ENCODE measurements at regions of chr3 and their contacts with region 1.

Region 1: DNA sequence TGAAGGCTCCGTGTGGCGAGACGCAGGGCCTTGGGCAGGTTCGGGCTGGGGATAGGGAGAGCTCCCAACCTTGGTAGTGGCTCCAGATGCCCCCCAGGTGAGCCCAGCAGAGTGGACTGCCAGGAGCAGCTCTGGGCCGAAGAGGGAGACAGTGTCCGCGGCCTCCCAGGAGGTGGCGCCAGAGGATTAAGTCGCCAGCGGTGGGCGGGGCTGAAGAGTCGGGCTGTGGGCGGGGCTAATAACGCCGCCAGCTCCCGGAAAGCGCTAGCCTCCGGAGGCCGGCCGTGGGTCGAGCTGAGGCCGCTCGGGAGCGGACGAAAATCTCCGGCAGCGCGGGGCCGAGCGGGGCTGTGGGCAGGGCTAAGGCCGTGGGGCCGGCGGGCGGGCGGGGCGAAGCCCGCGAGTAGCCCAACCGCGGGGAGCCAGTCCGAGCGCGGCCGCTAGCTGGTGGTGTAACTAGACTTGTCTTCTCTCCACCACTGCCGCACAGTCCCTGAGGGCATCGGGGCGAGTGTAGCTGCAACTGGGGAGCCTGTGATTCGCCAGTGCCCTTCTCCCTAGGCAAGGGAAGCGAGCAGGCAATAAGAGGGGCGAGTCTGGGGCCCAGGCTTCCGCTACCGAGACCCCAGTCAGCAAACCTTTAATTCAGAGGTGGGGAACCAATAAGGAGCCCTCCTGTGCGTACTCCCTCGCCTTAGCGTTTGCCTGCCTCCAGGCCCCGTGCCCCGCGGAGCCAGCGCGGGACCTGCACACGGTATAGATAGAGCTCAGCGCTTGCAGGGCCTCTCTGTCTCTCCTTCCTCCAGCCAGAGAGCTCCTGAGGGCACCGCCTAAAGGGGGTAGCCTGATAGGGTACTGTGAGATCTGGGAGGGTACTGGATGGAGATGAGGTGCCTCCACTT is 14.4 kb upstream of the BSN start:
- DNase-seq: peak; percentile 60
- H3K4me3 ChIP-seq: peak overlapping the region; percentile 43
- H3K27me3 ChIP-seq: peaks cover 2% of the 10 kb centered on the region
- CTCF ChIP-seq: peak; percentile 90

Region 2: DNA sequence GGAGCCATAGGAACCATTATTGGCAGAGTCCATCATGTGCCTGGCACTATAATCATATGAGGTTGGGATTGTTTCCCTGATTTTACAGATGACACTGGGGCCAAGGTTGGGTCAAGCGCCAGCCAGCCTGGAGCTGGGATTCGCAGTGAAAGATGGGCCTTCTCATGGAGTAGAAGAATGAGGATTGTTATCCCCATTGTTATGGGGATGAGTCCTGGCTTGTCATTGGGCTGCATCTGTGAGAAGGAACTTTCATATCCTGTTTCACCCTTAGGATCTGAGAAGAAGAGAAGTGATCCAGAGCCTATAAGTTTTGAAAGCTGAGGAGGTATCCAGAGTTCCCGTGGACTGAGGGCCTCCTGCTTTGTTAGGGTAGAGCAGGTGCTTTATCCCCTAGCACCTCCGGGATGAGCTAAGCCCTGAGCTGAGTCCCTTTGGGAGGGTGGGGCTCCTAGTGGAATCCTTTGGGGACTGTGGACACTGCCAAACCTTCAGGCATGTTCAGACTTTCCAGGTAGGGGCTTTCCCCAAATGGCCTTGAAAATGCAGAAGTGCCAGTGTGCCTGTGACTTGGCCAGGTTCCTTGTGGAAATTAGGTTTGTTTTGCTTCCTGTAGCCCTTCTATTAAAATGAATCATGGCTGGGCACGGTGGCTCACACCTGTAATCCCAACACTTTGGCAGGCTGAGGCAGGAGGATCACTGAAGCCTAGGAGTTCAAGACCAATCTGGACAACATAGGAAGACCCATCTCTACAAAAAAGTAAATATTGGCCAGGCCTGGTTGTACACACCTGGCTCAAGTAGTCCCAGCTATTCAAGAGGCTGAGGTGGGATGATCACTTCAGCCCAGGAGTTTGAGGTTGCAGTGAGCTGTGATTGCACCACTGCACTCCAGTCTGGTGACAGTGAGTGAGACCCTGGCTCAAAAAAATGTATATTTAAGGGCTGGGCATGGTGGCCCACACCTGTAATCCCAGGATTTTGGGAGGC is 15.9 kb before region 1 on chr3:
- CTCF ChIA-PET with region 1: interaction called, 18 read pairs
- POLR2A ChIA-PET with region 1: no interaction called
- DNase-seq: no peak
- H3K4me3 ChIP-seq: no peak overlapping the region
- H3K27me3 ChIP-seq: no peaks in the 10 kb centered on the region
- CTCF ChIP-seq: no peak

Region 3: DNA sequence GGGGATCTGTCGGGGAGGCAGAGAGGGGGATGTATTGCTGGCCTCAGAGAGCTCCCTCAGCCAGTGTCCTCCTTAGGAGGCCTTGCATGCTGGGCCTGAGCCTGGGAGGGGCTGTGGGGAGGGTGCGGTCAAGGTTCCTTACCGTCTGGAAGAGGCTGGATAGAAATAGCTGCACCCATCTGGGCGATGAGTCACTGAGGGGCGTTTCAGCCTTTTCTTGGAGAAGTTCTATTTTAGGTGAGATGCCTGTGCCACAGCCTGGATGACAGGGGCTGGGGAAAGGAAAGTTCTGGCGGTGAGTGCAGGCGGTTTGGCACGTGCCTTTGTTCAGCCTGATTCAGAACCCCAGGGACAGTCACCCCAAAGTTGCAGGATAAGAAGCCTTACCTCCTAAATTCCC is 98.5 kb after region 1 on chr3:
- CTCF ChIA-PET with region 1: interaction called, 13 read pairs
- POLR2A ChIA-PET with region 1: no interaction called
- DNase-seq: peak; percentile 35
- H3K4me3 ChIP-seq: no peak overlapping the region
- H3K27me3 ChIP-seq: peaks cover 3% of the 10 kb centered on the region
- CTCF ChIP-seq: no peak

Region 4: DNA sequence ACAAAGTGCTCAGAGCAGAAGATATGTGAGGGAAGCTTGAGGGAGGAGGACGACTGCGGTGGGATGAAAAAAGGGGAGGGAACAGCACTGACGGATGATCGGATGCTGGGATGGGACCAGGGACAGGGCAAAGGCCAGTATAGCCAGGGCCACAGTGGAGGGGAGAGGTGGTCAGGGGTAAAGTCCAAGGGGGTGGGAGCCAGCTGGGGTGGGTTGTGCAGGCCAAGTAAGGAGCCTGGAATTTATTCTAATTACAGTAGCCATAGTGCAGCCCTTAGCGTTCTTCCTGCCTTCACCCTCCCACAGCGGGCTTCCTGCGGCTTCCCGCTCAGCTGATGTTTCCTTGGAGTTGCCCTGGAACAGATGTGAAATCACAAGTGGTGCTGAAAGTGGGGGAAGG is 126.7 kb after region 1 on chr3:
- CTCF ChIA-PET with region 1: interaction called, 152 read pairs
- POLR2A ChIA-PET with region 1: no interaction called
- DNase-seq: no peak
- H3K4me3 ChIP-seq: no peak overlapping the region
- H3K27me3 ChIP-seq: peaks cover 5% of the 10 kb centered on the region; the same call in 1 of the 2 replicates
- CTCF ChIP-seq: no peak

Region 5: GRCh38 chr3:49683162-49683561 is 143.3 kb after region 1 on chr3:
- CTCF ChIA-PET with region 1: interaction called, 25 read pairs
- POLR2A ChIA-PET with region 1: no interaction called
- DNase-seq: no peak
- H3K4me3 ChIP-seq: no peak overlapping the region
- H3K27me3 ChIP-seq: no peaks in the 10 kb centered on the region
- CTCF ChIP-seq: no peak

Region 6: DNA sequence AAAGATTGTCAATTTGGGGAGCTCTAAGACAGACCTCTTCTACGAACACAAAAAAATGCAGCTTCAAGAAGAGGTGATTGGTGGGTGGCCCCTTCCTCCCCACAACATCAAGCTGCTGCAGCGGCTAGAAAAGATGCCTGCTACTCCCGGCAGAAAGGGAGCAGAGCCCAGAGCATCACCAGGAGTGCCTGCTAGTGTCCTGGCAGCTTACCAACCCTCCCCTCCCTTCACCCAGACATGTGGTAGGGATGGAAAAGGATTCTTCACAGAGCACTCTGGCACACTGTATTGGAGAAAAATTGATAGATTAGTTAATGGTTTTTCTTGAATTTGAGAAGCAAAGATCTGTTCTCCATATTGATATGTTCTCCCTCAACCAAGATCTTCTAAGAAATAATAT is 235.6 kb after region 1 on chr3:
- CTCF ChIA-PET with region 1: no interaction called
- POLR2A ChIA-PET with region 1: no interaction called
- DNase-seq: no peak
- H3K4me3 ChIP-seq: no peak overlapping the region
- H3K27me3 ChIP-seq: no peaks in the 10 kb centered on the region
- CTCF ChIP-seq: no peak

Region 7: DNA sequence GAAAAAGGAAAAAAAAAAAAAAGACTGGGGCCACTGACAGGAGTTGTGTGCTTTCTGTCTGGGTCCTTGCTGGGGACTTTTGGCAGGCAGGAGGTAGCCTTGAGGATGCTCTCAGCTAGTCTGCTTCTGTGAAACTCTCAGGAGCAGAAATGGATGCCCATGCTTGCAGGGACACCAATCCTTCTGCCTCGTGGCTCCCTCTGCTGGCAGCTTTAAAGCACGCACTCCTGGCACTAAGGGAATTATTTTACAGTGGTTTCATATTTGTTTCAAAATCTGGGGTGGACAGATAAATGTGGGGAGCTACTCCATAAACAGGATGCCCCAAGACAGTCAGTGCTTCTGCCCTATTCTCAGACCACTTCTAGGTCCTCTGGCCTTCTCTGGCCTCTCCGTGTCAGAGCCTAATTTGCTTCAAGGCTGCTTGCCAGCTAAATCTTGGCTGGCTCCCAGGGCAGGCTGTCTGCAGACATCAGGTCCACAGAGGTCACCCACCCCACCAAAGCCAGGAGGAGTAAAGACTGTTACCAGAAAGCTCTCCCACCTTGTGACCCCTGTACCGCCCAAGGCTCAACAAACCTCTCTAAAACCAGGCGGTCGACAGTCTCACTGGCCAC is 299.4 kb after region 1 on chr3:
- CTCF ChIA-PET with region 1: interaction called, 24 read pairs
- POLR2A ChIA-PET with region 1: no interaction called
- DNase-seq: peak; percentile 16
- H3K4me3 ChIP-seq: no peak overlapping the region
- H3K27me3 ChIP-seq: no peaks in the 10 kb centered on the region
- CTCF ChIP-seq: peak; percentile 89

Measured in BJ (cell line).